ENCODE measurements at regions of chr1 and their contacts with region 1.

Region 1: DNA sequence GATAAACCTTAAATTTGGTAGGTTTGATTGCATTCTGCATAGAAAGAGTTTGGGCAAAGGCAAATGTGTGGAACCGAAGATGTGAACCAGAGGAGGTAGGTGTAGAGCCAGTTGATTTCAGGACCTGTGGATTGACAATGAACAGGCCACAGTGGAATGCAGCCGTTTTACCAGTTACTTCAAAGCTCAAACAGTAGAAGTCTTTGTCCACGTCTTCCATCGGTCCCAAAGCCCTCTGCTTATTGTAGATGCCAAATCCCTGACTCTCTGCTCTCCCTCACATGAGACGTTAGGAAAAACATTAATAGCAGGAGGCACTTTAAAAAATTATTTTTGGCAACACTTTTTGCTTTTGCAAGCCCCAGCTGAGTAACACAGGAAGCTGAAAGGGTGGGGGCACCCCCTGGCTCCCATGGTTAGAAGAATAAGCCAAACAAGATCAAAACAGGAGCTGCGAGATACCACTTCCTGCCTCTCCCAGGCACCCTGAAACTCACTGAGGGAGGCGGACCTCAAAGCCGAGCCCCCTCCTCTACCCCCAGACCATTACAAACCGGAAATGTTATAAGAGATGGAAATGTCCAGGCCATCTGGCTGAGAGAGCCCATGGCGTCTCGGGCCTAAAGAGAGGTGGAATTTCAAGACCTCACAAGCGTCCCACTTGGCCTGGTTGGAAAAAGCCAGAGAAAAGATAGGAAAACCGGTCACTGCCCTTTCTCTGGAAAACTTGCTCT is 13.5 kb downstream of the TRAF3IP3 start:
- DNase-seq: peak; percentile 44 to 84 (median 77)
- H3K4me3 ChIP-seq: peak overlapping the region; percentile 94
- H3K4me3 Mint-ChIP-seq: no peak overlapping the region
- H3K27ac ChIP-seq: peak overlapping the region; percentile 81
- H3K27ac Mint-ChIP-seq: peak overlapping the region in 1 of 8 donors; percentile 94
- H3K4me1 ChIP-seq: peaks cover 76% of the 10 kb centered on the region
- H3K4me1 Mint-ChIP-seq: peaks cover 41 to 48% (median 42%) of the 10 kb centered on the region in 3 donors
- H3K27me3 ChIP-seq: no peaks in the 10 kb centered on the region
- H3K27me3 Mint-ChIP-seq: no peaks in the 10 kb centered on the region

Region 2: GRCh38 chr1:209720326-209720725 is 49.0 kb before region 1 on chr1:
- CTCF ChIA-PET with region 1: no interaction called
- POLR2A ChIA-PET with region 1: no interaction called
- DNase-seq: no peak
- H3K4me3 ChIP-seq: no peak overlapping the region
- H3K4me3 Mint-ChIP-seq: no peak overlapping the region
- H3K27ac ChIP-seq: no peak overlapping the region
- H3K27ac Mint-ChIP-seq: peak overlapping the region in 1 of 8 donors; percentile 55
- H3K4me1 ChIP-seq: peaks cover 15% of the 10 kb centered on the region
- H3K4me1 Mint-ChIP-seq: peaks cover 3 to 5% (median 3%) of the 10 kb centered on the region in 3 donors
- H3K27me3 ChIP-seq: no peaks in the 10 kb centered on the region
- H3K27me3 Mint-ChIP-seq: peaks cover 0 to 3% of the 10 kb centered on the region in 2 donors

Region 3: GRCh38 chr1:209747580-209748262 is 21.6 kb before region 1 on chr1:
- CTCF ChIA-PET with region 1: interaction called, 255 read pairs
- POLR2A ChIA-PET with region 1: interaction called, 20 read pairs
- DNase-seq: peak; percentile 71 to 87 (median 82)
- H3K4me3 ChIP-seq: peak overlapping the region; percentile 76
- H3K4me3 Mint-ChIP-seq: peak overlapping the region; percentile 75 to 92 (median 86)
- H3K27ac ChIP-seq: peak overlapping the region; percentile 43
- H3K27ac Mint-ChIP-seq: peak overlapping the region; percentile 83 to 97 (median 88)
- H3K4me1 ChIP-seq: peaks cover 54% of the 10 kb centered on the region
- H3K4me1 Mint-ChIP-seq: peaks cover 47 to 60% (median 53%) of the 10 kb centered on the region in 3 donors
- H3K27me3 ChIP-seq: no peaks in the 10 kb centered on the region
- H3K27me3 Mint-ChIP-seq: no peaks in the 10 kb centered on the region

Region 4: DNA sequence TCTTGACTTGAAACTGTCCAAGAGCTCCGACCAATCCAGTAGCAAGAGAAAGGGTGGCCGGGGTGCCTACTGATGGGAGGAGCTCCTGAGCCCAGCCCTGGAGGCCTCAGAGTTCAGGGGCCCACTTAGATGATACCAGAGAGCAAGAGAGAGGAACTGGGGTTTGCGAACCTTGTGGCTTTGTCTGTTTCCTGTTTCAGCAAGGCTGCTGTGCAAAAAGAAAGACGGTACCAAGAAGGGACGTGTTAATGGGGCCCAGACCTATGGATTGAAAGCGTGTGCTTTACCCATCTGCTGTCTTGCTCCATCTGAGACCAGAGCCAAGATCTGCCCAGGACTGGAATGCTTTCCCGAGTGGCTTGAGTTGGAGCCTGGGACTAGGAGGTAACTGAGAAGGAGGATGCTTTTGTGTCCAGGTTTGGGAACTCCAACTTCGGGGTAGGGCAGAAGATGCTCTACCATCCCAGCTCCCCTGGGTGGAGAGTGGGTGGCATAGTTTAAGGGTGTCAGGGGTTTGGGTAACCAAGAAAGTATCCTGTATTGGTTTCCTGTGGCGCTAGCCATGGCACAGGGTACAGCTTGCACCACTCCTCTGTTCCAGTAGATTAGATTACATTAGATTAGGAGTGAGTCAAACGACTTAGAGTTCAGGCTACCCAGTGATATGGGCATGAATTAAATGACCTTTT is 13.3 kb before region 1 on chr1 and contains the start of gene TRAF3IP3:
- CTCF ChIA-PET with region 1: interaction called, 255 read pairs
- POLR2A ChIA-PET with region 1: interaction called, 50 read pairs
- DNase-seq: peak; percentile 52 to 84 (median 80)
- H3K4me3 ChIP-seq: peak within 1 kb of the TSS; percentile 89
- H3K4me3 Mint-ChIP-seq: peak within 1 kb of the TSS; percentile 90 to 100 (median 98)
- H3K27ac ChIP-seq: peak within 1 kb of the TSS; percentile 57
- H3K27ac Mint-ChIP-seq: peak within 1 kb of the TSS; percentile 84 to 98 (median 96)
- H3K4me1 ChIP-seq: peaks cover 78% of the 10 kb centered on the region
- H3K4me1 Mint-ChIP-seq: peaks cover 67 to 81% (median 73%) of the 10 kb centered on the region in 3 donors
- H3K27me3 ChIP-seq: no peaks in the 10 kb centered on the region
- H3K27me3 Mint-ChIP-seq: no peaks in the 10 kb centered on the region
- total RNA-seq, gene TRAF3IP3: 193 to 209 TPM

Region 5: GRCh38 chr1:209784265-209785169 is 15.2 kb after region 1 on chr1 and contains the start of gene C1orf74:
- CTCF ChIA-PET with region 1: interaction called, 21 read pairs
- POLR2A ChIA-PET with region 1: interaction called, 28 read pairs
- DNase-seq: peak; percentile 98 to 100 (median 99)
- H3K4me3 ChIP-seq: peak within 1 kb of the TSS; percentile 89
- H3K4me3 Mint-ChIP-seq: peak within 1 kb of the TSS; percentile 85 to 99 (median 93)
- H3K27ac ChIP-seq: peak within 1 kb of the TSS; percentile 90
- H3K27ac Mint-ChIP-seq: peak within 1 kb of the TSS; percentile 90 to 99 (median 98)
- H3K4me1 ChIP-seq: peaks cover 20% of the 10 kb centered on the region
- H3K4me1 Mint-ChIP-seq: peaks cover 17 to 45% (median 41%) of the 10 kb centered on the region in 3 donors
- H3K27me3 ChIP-seq: no peaks in the 10 kb centered on the region
- H3K27me3 Mint-ChIP-seq: peaks cover 0 to 5% of the 10 kb centered on the region in 2 donors
- total RNA-seq, gene C1orf74: 2.2 TPM

Region 6: GRCh38 chr1:209827384-209828262 is 58.3 kb after region 1 on chr1 and contains the start of gene UTP25:
- CTCF ChIA-PET with region 1: interaction called, 15 read pairs
- POLR2A ChIA-PET with region 1: interaction called, 4 read pairs
- DNase-seq: peak; percentile 83 to 94 (median 91)
- H3K4me3 ChIP-seq: peak within 1 kb of the TSS; percentile 99
- H3K4me3 Mint-ChIP-seq: peak within 1 kb of the TSS; percentile 90 to 97 (median 96)
- H3K27ac ChIP-seq: peak within 1 kb of the TSS; percentile 90
- H3K27ac Mint-ChIP-seq: peak within 1 kb of the TSS; percentile 74 to 98 (median 90)
- H3K4me1 ChIP-seq: peaks cover 29% of the 10 kb centered on the region
- H3K4me1 Mint-ChIP-seq: peaks cover 46 to 50% (median 47%) of the 10 kb centered on the region in 3 donors
- H3K27me3 ChIP-seq: no peaks in the 10 kb centered on the region
- H3K27me3 Mint-ChIP-seq: peaks cover 7 to 11% of the 10 kb centered on the region in 2 donors
- total RNA-seq, gene UTP25: 14.9 to 15.2 TPM

Measured in CD8-positive, alpha-beta memory T cell (primary cell).